Activated CD4-positive, alpha-beta memory T cell treated with anti-CD3 and anti-CD28 coated beads for 36 hours (primary cell): ENCODE measurements at regions of chr22 and their contacts with region 1.

Region 1: DNA sequence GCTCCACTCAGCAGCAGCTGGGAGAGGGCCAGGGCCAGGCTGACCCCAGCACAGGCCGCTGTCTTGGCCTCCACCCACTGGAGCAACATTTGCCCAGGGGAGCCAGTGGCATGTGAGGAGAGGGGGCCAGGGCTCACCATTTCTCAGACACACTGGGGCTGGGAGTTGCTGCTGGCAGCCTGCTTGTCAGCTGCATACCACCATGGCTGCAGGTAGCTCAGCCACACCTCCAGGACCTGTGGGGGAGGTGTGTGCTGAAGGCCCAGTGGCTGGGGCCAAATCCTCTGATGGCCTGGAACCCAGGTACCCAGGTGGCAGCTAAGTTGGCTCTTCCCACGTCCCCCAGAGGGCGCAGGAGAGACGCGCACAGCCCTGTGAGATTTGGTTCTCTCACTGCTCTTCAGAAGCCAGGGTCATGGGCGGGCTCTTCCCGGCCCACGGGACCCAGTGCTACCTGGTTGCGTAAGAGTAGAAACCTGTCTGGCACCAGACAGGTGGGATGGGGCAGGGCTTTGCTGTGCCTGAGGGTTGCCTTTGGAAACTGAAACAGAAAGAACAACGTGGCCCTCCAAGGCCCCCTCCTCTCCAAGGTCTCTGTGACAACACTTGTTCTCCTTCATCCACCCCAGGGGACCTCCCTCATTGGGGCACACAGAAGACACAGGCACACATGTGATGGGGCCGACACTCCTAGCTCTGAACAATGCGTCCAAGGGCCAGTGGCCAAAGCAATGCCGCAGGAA is 98.8 kb downstream of the MED15 start:
- DNase-seq: peak; percentile 80
- H3K4me3 Mint-ChIP-seq: no peak overlapping the region
- H3K27ac Mint-ChIP-seq: no peak overlapping the region
- H3K4me1 Mint-ChIP-seq: peaks cover 7% of the 10 kb centered on the region
- H3K27me3 Mint-ChIP-seq: no peaks in the 10 kb centered on the region

Region 2: DNA sequence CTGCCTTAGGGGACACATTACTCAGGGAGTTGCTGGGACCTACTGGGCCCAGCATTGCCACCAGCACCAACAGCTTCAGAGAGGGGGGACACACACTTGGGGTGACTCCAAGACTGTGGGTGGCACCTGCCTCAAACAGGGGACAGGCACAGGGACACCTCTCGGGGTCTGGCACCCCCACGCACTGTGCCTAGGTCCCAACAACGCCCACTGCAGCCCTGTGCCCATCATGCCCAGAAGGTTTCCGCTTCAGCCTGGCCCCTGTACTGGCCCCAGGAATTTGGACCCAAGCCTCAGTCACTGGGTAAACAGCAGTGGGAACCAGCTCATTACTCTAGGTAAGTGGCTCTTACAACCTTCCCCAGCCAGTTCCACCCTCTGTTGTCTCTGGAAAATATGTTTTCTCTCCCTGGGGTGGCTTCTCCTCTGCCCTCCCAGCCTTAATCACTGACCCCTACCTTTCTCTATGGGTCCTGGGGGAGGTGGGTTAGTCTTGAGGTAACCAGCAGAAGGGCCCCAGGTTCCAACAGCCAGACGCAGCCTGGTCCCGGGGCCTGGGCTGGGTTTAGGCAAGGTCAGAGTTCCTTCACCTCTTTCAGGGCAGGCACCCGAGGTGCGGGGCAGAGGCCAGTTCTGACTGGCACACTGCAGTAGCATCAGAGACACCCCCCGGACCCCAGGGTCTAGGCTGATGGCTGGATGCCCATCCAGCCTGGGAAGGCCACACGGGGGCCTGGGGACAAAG is 24.8 kb after region 1 on chr22:
- CTCF ChIA-PET with region 1: interaction called, 11 read pairs
- POLR2A ChIA-PET with region 1: interaction called, 4 read pairs
- intact Hi-C with region 1: no loop called
- DNase-seq: no peak
- H3K4me3 Mint-ChIP-seq: no peak overlapping the region
- H3K27ac Mint-ChIP-seq: no peak overlapping the region
- H3K4me1 Mint-ChIP-seq: no peaks in the 10 kb centered on the region
- H3K27me3 Mint-ChIP-seq: peaks cover 4% of the 10 kb centered on the region

Region 3: DNA sequence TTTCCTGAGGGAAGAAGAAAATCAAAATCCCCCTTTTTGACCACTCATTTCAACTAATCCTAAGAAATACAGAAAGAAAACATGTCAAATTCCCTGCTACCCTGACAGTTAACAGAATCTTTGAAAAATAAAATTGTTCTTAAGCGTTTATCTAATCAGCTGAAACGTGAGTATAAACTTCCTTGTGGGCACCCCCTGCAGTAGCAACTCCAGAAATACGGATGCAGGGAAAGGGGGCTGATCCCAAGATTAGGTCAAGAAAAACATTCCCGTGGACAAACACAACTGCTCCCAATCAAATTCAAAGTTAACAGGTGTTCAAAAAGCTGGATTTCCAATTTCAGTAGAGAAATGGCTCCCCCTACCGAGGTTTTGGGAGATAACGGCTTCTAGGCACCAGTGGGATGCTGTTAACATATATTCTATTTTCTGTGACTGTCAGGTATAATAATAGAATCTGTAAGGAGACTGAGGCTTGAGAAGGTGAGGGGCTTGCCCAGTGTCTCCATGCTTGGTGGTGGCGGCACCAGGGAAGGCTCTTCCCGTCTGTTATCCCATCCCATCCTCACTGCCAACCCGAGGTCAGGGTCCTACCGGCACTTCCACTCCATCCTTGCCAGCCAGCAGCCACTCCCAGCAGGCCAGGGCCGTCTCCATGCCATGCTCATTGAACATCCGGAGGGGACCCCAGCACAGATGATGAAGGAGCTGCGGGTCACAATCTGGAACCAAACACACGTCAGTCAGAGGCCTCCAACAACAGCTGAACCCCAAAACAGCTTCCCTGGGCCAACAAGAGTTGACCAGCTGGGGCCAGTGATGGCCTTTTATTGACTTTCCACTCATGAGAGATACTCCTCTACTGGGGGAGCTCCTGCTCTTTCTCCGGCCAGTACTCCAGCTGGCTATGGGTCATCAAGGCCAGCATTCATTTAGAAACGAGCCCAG is 135.7 kb after region 1 on chr22:
- CTCF ChIA-PET with region 1: interaction called, 21 read pairs
- POLR2A ChIA-PET with region 1: no interaction called
- intact Hi-C with region 1: loop called (anchors 2 kb)
- DNase-seq: peak; percentile 50
- H3K4me3 Mint-ChIP-seq: no peak overlapping the region
- H3K27ac Mint-ChIP-seq: no peak overlapping the region
- H3K4me1 Mint-ChIP-seq: no peaks in the 10 kb centered on the region
- H3K27me3 Mint-ChIP-seq: no peaks in the 10 kb centered on the region

Region 4: GRCh38 chr22:20858615-20859416 is 252.6 kb after region 1 on chr22 and contains the starts of genes PI4KA and SNAP29:
- CTCF ChIA-PET with region 1: no interaction called
- POLR2A ChIA-PET with region 1: no interaction called
- intact Hi-C with region 1: no loop called
- DNase-seq: peak; percentile 98
- H3K4me3 Mint-ChIP-seq: peak within 1 kb of the TSS; percentile 86
- H3K27ac Mint-ChIP-seq: peak within 1 kb of the TSS; percentile 45
- H3K4me1 Mint-ChIP-seq: peaks cover 49% of the 10 kb centered on the region
- H3K27me3 Mint-ChIP-seq: no peaks in the 10 kb centered on the region
- total RNA-seq, gene PI4KA: 57.9 to 58.9 TPM
- total RNA-seq, gene SNAP29: 28.2 to 29.1 TPM